Sciatic nerve (tissue), 2 donors: ENCODE measurements at regions of chr1 and their contacts with region 1.

Region 1: DNA sequence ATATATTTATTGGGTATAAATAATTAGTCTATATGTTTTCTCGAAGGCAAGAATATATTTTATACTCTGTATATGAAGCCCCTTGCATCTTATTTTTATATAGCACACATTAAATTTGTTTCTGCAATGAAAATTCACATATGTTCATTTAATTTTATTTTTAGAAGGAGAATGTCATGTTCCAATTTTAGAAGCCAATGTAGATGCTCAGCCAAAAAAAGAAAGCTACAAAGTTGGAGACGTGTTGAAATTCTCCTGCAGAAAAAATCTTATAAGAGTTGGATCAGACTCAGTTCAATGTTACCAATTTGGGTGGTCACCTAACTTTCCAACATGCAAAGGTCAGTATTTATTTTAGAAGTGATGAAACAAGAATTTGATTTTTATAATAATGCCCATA is 16.6 kb downstream of the CFHR5 start:
- DNase-seq: no peak
- ATAC-seq: no peak

Region 2: DNA sequence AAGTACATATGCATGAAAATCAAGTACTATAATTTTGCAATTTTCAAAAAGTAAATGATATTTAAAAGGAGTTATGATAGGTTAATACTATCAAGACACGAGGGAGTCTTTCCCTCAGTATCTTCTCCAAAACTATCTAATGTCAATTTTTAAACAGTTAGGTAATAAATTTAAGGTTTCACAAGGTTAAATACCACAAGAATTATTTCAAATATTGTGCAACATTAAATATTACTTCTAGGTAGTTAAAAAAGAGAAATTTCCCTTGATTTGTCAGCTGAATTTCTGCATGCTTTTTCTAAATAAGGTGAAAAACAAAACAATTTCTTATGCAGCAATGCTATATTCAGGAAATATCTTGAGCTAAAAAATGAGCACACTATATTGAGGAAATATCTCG is 13.0 kb before region 1 on chr1:
- intact Hi-C with region 1: loop called (anchors 1 kb)
- DNase-seq: no peak
- ATAC-seq: no peak